Gastrocnemius medialis (tissue), 4 donors: ENCODE measurements at regions of chr13 and their contacts with region 1.

Region 1: DNA sequence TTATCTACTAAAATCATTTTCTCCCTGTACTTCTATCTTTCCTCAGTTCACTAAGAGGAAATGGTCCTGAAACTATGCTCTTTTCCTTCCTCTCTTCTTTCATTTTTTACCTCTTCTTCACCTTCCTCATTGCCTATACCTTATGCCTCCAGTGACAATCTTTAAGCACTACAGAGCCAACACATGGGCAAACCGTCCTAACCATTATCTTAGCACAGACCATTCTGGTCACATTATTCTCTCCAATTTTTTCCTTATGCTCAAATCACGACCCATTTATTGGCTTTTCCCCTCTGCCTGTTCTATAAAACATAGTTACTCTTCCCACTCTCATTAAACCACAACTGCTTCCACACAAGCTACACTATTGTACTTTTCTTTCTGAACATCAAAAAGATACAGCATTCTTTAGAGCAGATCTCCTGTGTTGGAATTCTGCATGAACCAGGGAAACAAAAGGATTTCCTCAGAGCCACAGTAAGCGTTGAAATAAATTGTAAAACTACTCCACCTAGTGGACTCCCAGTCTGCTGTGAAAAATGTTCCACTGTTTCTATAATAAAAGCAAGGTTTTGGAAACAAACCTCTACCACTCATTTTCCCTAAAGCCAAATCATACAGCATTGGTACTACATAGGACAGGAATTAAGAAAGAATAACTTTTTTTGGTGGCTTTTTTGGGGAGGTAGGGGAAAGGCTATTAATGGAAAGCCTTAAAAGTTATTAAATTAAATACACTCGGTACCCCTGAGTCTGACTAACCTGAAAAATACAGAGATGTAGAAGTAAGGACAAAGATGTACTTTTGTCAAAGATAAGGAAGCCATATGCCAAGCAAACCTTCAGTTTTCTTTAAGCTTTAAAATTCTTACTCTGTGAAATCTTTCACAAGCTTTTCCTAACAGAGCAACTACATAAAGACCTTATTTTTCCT is 19.5 kb downstream of the NUFIP1 start:
- DNase-seq: no peak
- ATAC-seq: peak; percentile 64 to 69
- H3K4me3 ChIP-seq: no peak overlapping the region
- H3K27ac ChIP-seq: peak overlapping the region; percentile 60 to 81 (median 79)
- H3K4me1 ChIP-seq: peaks cover 37 to 51% of the 10 kb centered on the region in 2 donors
- H3K27me3 ChIP-seq: no peaks in the 10 kb centered on the region
- CTCF ChIP-seq: peak; percentile 78 to 92 (median 82)
- POLR2A ChIP-seq: no peak

Region 2: GRCh38 chr13:44759384-44760360 is 210.1 kb before region 1 on chr13:
- in situ Hi-C with region 1: no loop called
- intact Hi-C with region 1: loop called (anchors 5 kb)
- DNase-seq: peak; percentile 68 to 86
- ATAC-seq: peak; percentile 81 to 86
- H3K4me3 ChIP-seq: peak overlapping the region in 3 of 4 donors; percentile 30 to 36 (median 33)
- H3K27ac ChIP-seq: peak overlapping the region; percentile 89 to 96 (median 96)
- H3K4me1 ChIP-seq: peaks cover 32 to 47% of the 10 kb centered on the region in 2 donors
- H3K27me3 ChIP-seq: no peaks in the 10 kb centered on the region
- CTCF ChIP-seq: no peak
- POLR2A ChIP-seq: peak in 1 of 2 donors; percentile 33

Region 3: GRCh38 chr13:44904967-44905366 is 64.9 kb before region 1 on chr13:
- in situ Hi-C with region 1: no loop called
- intact Hi-C with region 1: loop called (anchors 5 kb)
- DNase-seq: peak; percentile 73 to 79
- ATAC-seq: peak; percentile 72 to 89
- H3K4me3 ChIP-seq: no peak overlapping the region
- H3K27ac ChIP-seq: peak overlapping the region; percentile 82 to 91 (median 86)
- H3K4me1 ChIP-seq: peaks cover 47 to 56% of the 10 kb centered on the region in 2 donors
- H3K27me3 ChIP-seq: no peaks in the 10 kb centered on the region
- CTCF ChIP-seq: no peak
- POLR2A ChIP-seq: no peak